Caco-2 (cell line): ENCODE measurements at regions of chr2 and their contacts with region 1.

Region 1: DNA sequence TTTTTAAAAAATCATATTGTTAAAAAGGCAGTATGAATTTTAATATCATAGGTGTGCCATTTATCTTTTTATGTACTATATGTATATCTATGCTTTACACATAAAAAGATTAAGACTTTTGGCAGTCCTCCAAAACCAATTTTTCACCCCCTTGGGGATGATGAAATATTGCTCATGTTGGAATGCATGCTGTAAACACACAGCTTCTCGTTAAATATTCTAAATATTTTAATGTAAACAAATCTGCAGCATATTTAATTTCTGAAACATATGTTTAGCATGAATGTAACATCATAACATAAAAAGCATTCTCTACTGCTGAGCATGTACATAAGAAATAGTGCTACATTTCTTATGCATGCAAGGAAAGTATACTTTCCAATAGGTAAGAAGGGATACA is 484.3 kb upstream of the LRATD1 start:
- DNase-seq: no peak
- H3K4me3 ChIP-seq: no peak overlapping the region
- H3K4me3 Mint-ChIP-seq: no peak overlapping the region
- H3K27ac Mint-ChIP-seq: no peak overlapping the region
- H3K4me1 ChIP-seq: no peaks in the 10 kb centered on the region
- H3K4me1 Mint-ChIP-seq: no peaks in the 10 kb centered on the region
- H3K27me3 ChIP-seq: no peaks in the 10 kb centered on the region
- H3K27me3 Mint-ChIP-seq: no peaks in the 10 kb centered on the region
- CTCF ChIP-seq: no peak

Region 2: GRCh38 chr2:13905831-13906230 is 242.4 kb before region 1 on chr2:
- CTCF ChIA-PET with region 1: no interaction called
- POLR2A ChIA-PET with region 1: no interaction called
- intact Hi-C with region 1: no loop called
- DNase-seq: no peak
- H3K4me3 ChIP-seq: no peak overlapping the region
- H3K4me3 Mint-ChIP-seq: no peak overlapping the region
- H3K27ac Mint-ChIP-seq: no peak overlapping the region
- H3K4me1 ChIP-seq: no peaks in the 10 kb centered on the region
- H3K4me1 Mint-ChIP-seq: no peaks in the 10 kb centered on the region
- H3K27me3 ChIP-seq: no peaks in the 10 kb centered on the region
- H3K27me3 Mint-ChIP-seq: no peaks in the 10 kb centered on the region
- CTCF ChIP-seq: no peak

Region 3: DNA sequence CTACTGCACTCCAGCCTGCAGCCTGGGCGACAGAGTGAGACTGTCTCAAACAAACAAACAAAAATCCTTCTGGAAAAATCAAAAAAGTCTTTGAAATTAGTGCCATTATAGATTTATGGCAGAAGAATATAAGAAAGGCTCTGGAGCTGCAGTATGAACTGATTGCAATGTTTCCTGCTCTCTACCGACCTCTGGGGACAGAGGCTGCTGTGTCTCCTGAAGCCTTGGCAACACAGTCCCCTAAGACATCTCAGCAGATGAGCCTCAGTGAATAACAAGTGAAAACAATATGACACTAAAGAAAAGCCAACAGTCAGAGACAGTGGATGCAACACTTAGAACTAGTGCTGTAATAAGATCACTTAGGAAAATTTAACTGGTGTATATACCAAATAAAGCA is 10.6 kb before region 1 on chr2:
- CTCF ChIA-PET with region 1: no interaction called
- POLR2A ChIA-PET with region 1: no interaction called
- intact Hi-C with region 1: loop called (anchors 1 kb)
- DNase-seq: peak in 1 of 2 experiments; percentile 5
- H3K4me3 ChIP-seq: no peak overlapping the region
- H3K4me3 Mint-ChIP-seq: no peak overlapping the region
- H3K27ac Mint-ChIP-seq: no peak overlapping the region
- H3K4me1 ChIP-seq: no peaks in the 10 kb centered on the region
- H3K4me1 Mint-ChIP-seq: no peaks in the 10 kb centered on the region
- H3K27me3 ChIP-seq: no peaks in the 10 kb centered on the region
- H3K27me3 Mint-ChIP-seq: peaks cover 4% of the 10 kb centered on the region
- CTCF ChIP-seq: peak; percentile 12 to 41